ENCODE measurements at regions of chr17 and their contacts with region 1.

Region 1: DNA sequence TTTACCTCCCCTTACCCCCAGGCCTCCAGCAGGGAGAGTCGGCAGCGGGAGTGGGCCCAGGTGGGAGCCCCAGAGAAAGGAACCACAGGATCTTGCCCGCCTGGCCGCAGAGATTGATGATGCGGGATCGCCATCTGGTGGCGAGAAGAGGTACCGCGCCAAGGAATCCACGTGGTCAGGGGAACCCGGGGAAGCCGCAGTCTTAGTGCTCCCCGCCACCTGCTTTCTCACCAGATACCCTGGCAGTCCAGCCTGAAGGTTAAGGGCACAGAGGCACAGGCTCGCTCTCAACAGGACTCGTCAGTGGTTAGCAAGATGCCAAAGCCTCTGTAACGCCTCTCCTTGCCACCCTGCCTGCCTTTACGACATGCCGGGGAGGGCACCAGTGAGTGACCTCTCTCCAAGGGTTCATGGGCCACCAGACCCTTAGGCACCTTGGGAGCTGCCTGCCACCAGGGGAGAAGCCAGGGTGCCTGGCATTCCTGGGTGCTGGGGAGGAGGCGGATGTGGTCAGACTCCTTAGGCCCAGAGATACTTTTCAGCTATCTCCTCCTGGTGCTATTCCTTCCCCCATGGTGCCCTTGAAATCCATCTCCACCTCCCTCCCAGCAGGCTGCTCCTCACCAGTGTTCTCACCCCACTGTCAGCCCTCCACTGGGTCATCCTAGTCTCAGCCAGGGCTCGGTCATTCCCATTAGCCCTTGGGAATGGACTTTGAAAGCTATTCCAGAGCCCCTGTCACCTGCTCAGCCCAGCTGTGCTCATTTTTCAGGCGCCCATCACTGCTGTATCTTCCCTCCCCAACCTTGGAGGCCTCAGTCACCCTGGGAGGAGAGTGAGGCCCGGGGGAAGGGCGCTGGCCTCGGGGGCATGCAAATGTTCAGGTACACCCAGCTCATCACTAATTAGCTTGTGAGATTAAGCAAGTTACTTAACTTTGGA is 5.5 kb upstream of the RHBDF2 start:
- DNase-seq: peak; percentile 87 to 94
- ATAC-seq: peak; percentile 86
- H3K4me3 ChIP-seq: no peak overlapping the region
- H3K27ac ChIP-seq: no peak overlapping the region
- H3K4me1 ChIP-seq: peaks cover 0 to under 1% of the 10 kb centered on the region in 2 donors
- H3K27me3 ChIP-seq: no peaks in the 10 kb centered on the region

Region 2: GRCh38 chr17:76408052-76408849 is 98.4 kb before region 1 on chr17:
- intact Hi-C with region 1: loop called (anchors 2 to 5 kb)
- DNase-seq: peak in 1 of 2 donors; percentile 81
- ATAC-seq: no peak
- H3K4me3 ChIP-seq: no peak overlapping the region
- H3K27ac ChIP-seq: no peak overlapping the region
- H3K4me1 ChIP-seq: no peaks in the 10 kb centered on the region
- H3K27me3 ChIP-seq: no peaks in the 10 kb centered on the region

Region 3: GRCh38 chr17:76467366-76467765 is 39.3 kb before region 1 on chr17 and contains the start of gene AANAT:
- intact Hi-C with region 1: loop called (anchors 1 kb)
- DNase-seq: no peak
- ATAC-seq: no peak
- H3K4me3 ChIP-seq: no peak within 1 kb of the TSS
- H3K27ac ChIP-seq: no peak within 1 kb of the TSS
- H3K4me1 ChIP-seq: no peaks in the 10 kb centered on the region
- H3K27me3 ChIP-seq: no peaks in the 10 kb centered on the region
- total RNA-seq, gene AANAT: not detected